ENCODE measurements at regions of chr6 and their contacts with region 1.

Region 1: GRCh38 chr6:43877463-43878126 is 107.6 kb downstream of the VEGFA start:
- DNase-seq: no peak
- ATAC-seq: no peak
- H3K4me3 Mint-ChIP-seq: no peak overlapping the region
- H3K27ac Mint-ChIP-seq: no peak overlapping the region
- H3K4me1 Mint-ChIP-seq: no peaks in the 10 kb centered on the region
- H3K27me3 Mint-ChIP-seq: no peaks in the 10 kb centered on the region
- CTCF ChIP-seq: no peak

Region 2: GRCh38 chr6:43817192-43817591 is 60.4 kb before region 1 on chr6:
- CTCF ChIA-PET with region 1: no interaction called
- POLR2A ChIA-PET with region 1: no interaction called
- intact Hi-C with region 1: no loop called
- DNase-seq: no peak
- ATAC-seq: peak; percentile 71
- H3K4me3 Mint-ChIP-seq: no peak overlapping the region
- H3K27ac Mint-ChIP-seq: no peak overlapping the region
- H3K4me1 Mint-ChIP-seq: no peaks in the 10 kb centered on the region
- H3K27me3 Mint-ChIP-seq: peaks cover 19% of the 10 kb centered on the region
- CTCF ChIP-seq: no peak

Region 3: DNA sequence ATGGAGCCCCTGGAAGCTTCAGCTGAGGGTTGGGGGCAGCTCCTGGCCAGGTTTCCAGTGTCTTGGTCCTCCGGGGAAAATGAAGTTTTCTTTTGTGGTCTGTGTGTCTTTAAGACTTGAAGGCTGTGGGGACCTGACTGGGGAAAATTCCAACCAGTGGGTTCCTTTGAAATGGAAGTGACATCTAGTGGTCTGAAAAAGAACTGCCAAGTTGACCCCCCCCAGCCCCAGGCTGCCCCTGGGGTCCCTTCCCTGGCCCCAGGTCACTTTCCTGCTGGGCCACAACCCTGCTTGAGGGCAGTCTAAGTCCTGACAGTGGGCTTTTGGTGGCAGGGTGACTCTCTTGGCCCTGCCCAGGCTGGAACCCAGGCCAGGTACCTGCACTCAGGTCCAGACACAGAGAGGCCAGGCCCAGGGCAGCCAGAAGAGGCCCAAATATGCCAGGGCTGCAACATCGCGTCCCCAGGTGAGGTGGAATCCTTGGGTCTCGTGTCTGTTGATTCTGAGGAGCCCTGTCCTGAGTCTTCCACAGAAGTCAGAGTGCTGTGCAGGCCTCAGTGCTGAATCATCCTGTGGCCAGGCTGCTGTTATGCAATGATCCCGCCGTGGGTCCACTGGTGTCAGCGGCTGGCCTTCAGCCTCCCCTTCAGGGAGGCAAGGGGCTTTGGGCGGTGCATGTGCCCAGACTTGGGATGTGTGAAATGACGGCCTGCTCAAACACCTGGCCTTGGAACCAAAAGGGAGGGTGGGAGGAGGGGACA is 39.1 kb before region 1 on chr6:
- CTCF ChIA-PET with region 1: no interaction called
- POLR2A ChIA-PET with region 1: no interaction called
- intact Hi-C with region 1: loop called (anchors 1 kb)
- DNase-seq: no peak
- ATAC-seq: no peak
- H3K4me3 Mint-ChIP-seq: no peak overlapping the region
- H3K27ac Mint-ChIP-seq: no peak overlapping the region
- H3K4me1 Mint-ChIP-seq: no peaks in the 10 kb centered on the region
- H3K27me3 Mint-ChIP-seq: peaks cover 10% of the 10 kb centered on the region
- CTCF ChIP-seq: no peak

Measured in activated B cell treated with CpG ODN at 0.5 μM for 24 hours (primary cell).